CD4-positive, alpha-beta memory T cell (primary cell): ENCODE measurements at regions of chr7 and their contacts with region 1.

Region 1: DNA sequence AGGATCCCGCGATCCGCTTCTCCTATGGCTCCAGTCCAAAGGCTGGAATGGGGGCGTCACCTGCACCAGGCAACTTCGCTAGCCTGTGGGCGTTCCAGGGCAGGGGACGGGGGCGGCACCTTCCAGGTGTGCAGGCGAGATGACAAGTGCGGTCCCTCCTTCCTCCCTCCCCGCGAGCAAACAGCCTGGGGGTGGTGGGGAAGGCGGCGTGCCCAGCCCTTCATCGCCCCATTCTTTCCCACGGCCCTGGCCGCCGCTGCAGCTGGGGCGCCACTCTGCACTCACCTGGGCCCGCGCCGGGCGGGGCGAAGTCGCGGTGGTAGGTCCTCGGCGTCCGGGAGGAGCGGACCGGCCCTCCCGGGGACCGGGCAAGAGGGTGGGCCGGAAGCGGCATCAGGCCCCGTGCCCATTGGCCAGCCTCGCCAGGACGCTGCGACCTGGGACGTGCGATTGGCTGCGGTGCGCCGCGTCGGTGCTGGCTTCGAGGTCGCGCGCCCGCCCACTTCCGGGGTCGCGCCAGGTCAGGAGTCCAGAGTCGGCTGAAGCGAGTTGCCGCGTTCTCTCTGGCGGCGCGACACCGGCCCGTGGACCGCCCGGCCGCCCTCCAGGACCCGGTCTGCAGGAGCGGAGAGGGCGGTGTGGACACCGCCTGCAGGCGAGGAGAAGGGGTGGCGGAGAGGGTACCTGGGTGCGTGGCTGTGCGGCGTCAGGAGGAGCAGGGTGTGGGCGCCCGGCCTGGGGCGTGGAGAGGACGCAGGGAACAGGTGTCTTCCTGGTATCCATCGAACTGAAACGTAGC is at the start of gene TECPR1:
- DNase-seq: peak; percentile 85 to 91 (median 89)
- H3K4me3 ChIP-seq: peak within 1 kb of the TSS; percentile 83 to 99
- H3K4me3 Mint-ChIP-seq: peak within 1 kb of the TSS; percentile 92 to 97 (median 94)
- H3K27ac ChIP-seq: peak within 1 kb of the TSS; percentile 82
- H3K27ac Mint-ChIP-seq: peak within 1 kb of the TSS; percentile 98 to 100 (median 99)
- H3K4me1 ChIP-seq: peaks cover 71% of the 10 kb centered on the region
- H3K4me1 Mint-ChIP-seq: peaks cover 28 to 80% (median 56%) of the 10 kb centered on the region in 4 donors
- H3K27me3 ChIP-seq: no peaks in the 10 kb centered on the region
- H3K27me3 Mint-ChIP-seq: no peaks in the 10 kb centered on the region
- total RNA-seq, gene TECPR1: 140 to 147 TPM

Region 2: GRCh38 chr7:98202367-98203195 is 49.5 kb before region 1 on chr7:
- CTCF ChIA-PET with region 1: no interaction called
- POLR2A ChIA-PET with region 1: interaction called, 34 read pairs
- intact Hi-C with region 1: loop called (anchors 5 kb)
- DNase-seq: peak; percentile 56 to 72 (median 66)
- H3K4me3 ChIP-seq: peak overlapping the region in 1 of 2 donors; percentile 14
- H3K4me3 Mint-ChIP-seq: peak overlapping the region; percentile 57 to 82 (median 76)
- H3K27ac ChIP-seq: peak overlapping the region; percentile 2
- H3K27ac Mint-ChIP-seq: peak overlapping the region; percentile 43 to 93 (median 88)
- H3K4me1 ChIP-seq: peaks cover 44% of the 10 kb centered on the region
- H3K4me1 Mint-ChIP-seq: peaks cover 25 to 53% (median 40%) of the 10 kb centered on the region in 4 donors
- H3K27me3 ChIP-seq: no peaks in the 10 kb centered on the region
- H3K27me3 Mint-ChIP-seq: no peaks in the 10 kb centered on the region

Region 3: DNA sequence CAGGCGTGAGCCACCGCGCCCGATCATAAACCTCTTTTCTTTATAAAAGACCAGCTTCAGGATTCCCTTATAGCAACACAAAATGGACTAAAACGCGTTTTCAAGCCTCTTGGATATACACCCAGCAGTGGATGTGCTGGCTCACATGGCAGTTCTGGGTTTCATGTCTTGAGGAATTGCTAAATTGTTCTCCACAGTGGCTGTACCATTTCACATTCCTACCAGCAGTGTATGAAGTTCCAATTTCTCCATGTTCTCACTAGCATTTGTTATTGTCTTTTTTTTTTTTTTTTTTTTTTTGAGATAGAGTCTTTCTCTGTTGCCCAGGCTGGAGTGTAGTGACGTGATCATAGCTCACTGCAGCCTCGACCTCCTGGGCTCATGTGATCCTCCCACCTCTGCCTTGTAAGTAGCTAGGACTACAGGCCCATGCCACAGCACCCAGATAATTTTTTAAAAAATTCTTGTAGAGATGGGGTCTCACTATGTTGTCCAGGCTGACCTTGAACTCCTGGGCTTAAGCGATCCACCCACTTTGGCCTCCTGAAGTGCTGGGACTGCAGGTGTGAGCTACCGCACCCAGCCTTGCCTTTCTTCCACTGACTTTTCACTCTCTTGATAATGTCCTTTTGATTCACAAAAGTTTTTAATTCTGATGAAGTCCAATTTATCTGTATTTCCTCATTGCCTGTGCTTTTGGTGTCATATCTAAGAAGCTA is 17.5 kb before region 1 on chr7:
- CTCF ChIA-PET with region 1: interaction called, 3 read pairs
- POLR2A ChIA-PET with region 1: interaction called, 17 read pairs
- intact Hi-C with region 1: no loop called
- DNase-seq: no peak
- H3K4me3 ChIP-seq: no peak overlapping the region
- H3K4me3 Mint-ChIP-seq: no peak overlapping the region
- H3K27ac ChIP-seq: no peak overlapping the region
- H3K27ac Mint-ChIP-seq: peak overlapping the region in 1 of 7 donors; percentile 43
- H3K4me1 ChIP-seq: no peaks in the 10 kb centered on the region
- H3K4me1 Mint-ChIP-seq: peaks cover 0 to 4% (median 0%) of the 10 kb centered on the region in 4 donors
- H3K27me3 ChIP-seq: no peaks in the 10 kb centered on the region
- H3K27me3 Mint-ChIP-seq: no peaks in the 10 kb centered on the region

Region 4: DNA sequence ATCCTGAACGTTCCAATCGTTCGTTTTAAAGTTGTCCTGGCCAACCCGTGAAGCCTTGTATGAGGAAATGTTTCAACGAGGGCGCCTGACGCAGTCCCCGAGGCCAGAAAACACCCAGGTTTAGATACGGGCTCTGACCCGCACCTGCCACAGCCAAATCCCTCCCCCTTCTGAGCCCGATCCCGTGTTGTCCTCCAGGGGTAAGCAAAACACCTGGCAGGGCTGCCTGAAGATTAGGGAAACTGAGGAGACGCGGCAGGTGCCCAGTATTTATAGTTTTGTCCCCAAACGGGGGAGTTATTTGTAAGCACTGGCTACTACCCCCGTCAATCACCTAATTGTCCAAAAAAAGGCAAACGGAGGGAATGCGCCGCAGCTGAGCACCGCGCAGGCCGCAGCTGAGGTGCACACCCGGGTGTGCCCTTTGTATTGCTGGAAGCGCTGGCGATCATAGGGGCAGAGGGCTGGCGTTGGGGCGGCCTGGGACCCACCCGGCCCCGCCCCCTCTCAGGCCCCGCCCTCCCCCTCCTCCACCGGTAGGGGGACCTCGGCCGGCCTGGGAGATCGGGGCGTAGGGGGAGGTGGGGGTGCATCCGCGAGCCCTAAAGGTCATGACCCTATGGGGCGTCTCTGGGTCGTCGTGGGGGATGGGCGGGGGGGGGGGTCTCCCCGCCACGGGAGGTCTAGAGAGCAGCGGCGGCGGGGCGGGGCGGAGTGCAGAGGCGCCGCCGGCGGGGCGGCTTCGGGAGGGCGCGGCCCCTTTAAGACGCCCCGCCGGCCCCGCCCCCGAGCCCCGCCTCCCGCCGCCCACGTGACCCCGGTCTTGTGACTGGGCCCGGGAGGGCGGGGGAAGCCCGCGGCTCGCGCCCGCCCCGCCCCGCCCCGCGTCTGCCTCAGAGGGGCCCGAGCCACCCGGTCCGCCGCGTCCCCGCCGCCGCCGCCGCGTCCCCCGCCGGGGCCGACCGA is 29.0 kb after region 1 on chr7 and contains the start of gene BRI3:
- CTCF ChIA-PET with region 1: interaction called, 3 read pairs
- POLR2A ChIA-PET with region 1: interaction called, 71 read pairs
- intact Hi-C with region 1: loop called (anchors 1 kb)
- DNase-seq: peak; percentile 82 to 91 (median 84)
- H3K4me3 ChIP-seq: peak within 1 kb of the TSS; percentile 73 to 81
- H3K4me3 Mint-ChIP-seq: peak within 1 kb of the TSS; percentile 86 to 93 (median 88)
- H3K27ac ChIP-seq: peak within 1 kb of the TSS; percentile 74
- H3K27ac Mint-ChIP-seq: peak within 1 kb of the TSS; percentile 77 to 92 (median 90)
- H3K4me1 ChIP-seq: peaks cover 43% of the 10 kb centered on the region
- H3K4me1 Mint-ChIP-seq: peaks cover 10 to 36% (median 27%) of the 10 kb centered on the region in 4 donors
- H3K27me3 ChIP-seq: no peaks in the 10 kb centered on the region
- H3K27me3 Mint-ChIP-seq: no peaks in the 10 kb centered on the region
- total RNA-seq, gene BRI3: 73.8 to 80.4 TPM

Region 5: DNA sequence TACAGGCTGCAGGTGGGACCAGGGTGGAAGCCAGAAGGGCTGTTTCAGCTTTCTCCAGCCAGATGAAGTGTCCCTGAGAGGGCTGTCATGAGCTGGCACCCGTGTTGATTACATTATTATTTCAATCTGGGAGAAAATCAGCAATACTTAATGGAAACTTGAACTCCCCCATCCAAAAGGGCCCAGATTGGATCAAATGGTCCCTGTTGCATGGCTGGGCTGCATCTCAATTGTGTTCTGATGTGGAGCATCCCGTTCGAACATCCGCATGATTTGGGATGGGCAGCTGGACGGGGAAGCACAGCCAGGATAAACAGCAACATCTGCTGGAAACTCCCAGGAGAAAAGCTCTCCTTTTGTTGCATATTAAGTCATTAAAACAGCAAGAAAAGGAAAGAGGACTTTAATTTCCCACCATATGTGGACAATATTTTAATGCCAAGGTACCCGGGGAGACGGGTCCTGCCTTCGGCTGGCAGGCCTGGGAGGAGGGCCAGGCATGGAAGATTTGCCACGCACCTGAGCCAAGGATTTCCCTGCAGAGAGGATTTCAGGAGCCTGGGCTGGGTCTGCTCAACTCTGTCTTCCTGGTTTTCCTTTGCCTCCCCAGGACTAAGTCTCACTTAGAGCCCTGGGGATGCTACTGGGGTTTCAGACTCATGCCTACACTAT is 417.4 kb after region 1 on chr7:
- CTCF ChIA-PET with region 1: no interaction called
- POLR2A ChIA-PET with region 1: no interaction called
- intact Hi-C with region 1: no loop called
- DNase-seq: no peak
- H3K4me3 ChIP-seq: no peak overlapping the region
- H3K4me3 Mint-ChIP-seq: no peak overlapping the region
- H3K27ac ChIP-seq: no peak overlapping the region
- H3K27ac Mint-ChIP-seq: no peak overlapping the region
- H3K4me1 ChIP-seq: no peaks in the 10 kb centered on the region
- H3K4me1 Mint-ChIP-seq: no peaks in the 10 kb centered on the region
- H3K27me3 ChIP-seq: no peaks in the 10 kb centered on the region
- H3K27me3 Mint-ChIP-seq: peaks cover 0 to 3% of the 10 kb centered on the region in 2 donors